OCI-LY7 (cell line): ENCODE measurements at regions of chr19 and their contacts with region 1.

Region 1: GRCh38 chr19:11346092-11346940 is at the starts of genes CCDC159 and TMEM205:
- DNase-seq: peak; percentile 100
- H3K4me3 ChIP-seq: peak within 1 kb of the TSS; percentile 88
- H3K27ac ChIP-seq: peak within 1 kb of the TSS; percentile 55
- H3K4me1 ChIP-seq: peaks cover 26% of the 10 kb centered on the region
- CTCF ChIP-seq: peak; percentile 61
- total RNA-seq, gene CCDC159: 13.3 and 14.1 TPM in 2 replicates
- total RNA-seq, gene TMEM205: 58.4 and 58.9 TPM in 2 replicates

Region 2: DNA sequence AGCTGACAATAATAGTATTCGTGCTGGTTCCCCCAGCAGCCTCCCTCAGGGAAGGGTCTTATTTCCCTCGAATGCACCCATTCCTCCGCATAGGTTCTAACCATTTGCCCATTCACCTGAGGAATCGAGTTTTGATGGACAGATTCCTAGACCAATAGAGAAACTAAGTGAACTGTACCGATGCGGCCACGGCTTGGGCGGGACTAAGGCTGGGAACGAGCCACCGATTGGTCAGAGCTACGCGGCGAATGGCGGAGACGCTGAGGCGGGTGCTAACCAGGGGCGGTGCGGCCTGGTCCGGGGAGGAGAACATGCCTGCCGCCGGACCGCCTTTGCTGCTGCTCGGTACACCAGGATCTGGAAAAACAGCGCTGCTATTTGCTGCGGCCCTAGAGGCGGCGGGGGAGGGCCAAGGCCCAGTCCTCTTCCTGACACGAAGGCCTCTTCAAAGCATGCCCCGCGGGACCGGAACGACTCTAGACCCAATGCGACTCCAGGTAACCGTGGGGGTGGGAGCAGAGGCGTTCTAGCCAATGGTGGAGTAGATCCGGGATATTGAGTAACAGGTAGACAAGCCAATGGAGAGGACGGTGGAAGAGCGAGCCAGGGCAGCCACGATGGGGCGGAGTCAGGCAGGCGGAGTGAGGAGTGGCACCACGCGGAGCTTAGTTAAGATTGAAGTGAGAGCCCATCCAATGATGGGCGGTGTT is 28.3 kb after region 1 on chr19 and contains the start of gene SWSAP1:
- CTCF ChIA-PET with region 1: interaction called, 3 read pairs
- POLR2A ChIA-PET with region 1: interaction called, 7 read pairs
- intact Hi-C with region 1: loop called (anchors 2 kb)
- DNase-seq: peak; percentile 99
- H3K4me3 ChIP-seq: peak within 1 kb of the TSS; percentile 87
- H3K27ac ChIP-seq: peak within 1 kb of the TSS; percentile 80
- H3K4me1 ChIP-seq: peaks cover 41% of the 10 kb centered on the region
- CTCF ChIP-seq: no peak
- total RNA-seq, gene SWSAP1: 5.6 and 6.6 TPM in 2 replicates

Region 3: GRCh38 chr19:11422163-11423021 is 76.1 kb after region 1 on chr19:
- CTCF ChIA-PET with region 1: no interaction called
- POLR2A ChIA-PET with region 1: no interaction called
- intact Hi-C with region 1: no loop called
- DNase-seq: peak; percentile 95
- H3K4me3 ChIP-seq: peak overlapping the region; percentile 63
- H3K27ac ChIP-seq: peak overlapping the region; percentile 9
- H3K4me1 ChIP-seq: peaks cover 38% of the 10 kb centered on the region
- CTCF ChIP-seq: no peak

Region 4: DNA sequence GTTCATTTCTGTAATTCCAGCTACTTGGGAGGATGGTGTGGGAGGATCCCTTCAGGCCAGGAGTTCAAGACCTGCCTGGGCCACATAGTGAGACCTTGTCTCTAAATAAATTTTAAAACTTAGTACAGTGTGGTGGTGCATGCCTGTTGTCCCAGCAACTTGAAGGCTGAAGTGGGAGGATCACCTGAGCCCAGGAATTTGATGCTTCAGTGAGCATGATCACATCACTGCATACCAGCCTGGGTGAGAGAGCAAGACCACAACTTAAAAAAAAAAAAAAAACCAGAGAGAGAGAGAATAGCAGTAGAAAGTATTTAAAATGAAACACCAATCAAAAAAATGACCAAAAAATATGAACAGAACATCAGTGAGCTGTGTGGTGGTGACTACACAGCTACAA is 399.6 kb after region 1 on chr19:
- CTCF ChIA-PET with region 1: no interaction called
- POLR2A ChIA-PET with region 1: no interaction called
- intact Hi-C with region 1: no loop called
- DNase-seq: no peak
- H3K4me3 ChIP-seq: no peak overlapping the region
- H3K27ac ChIP-seq: no peak overlapping the region
- H3K4me1 ChIP-seq: no peaks in the 10 kb centered on the region
- CTCF ChIP-seq: no peak